ENCODE measurements at regions of chr11 and their contacts with region 1.

Region 1: GRCh38 chr11:104623518-104623917 is 274.7 kb downstream of the CASP12 start:
- DNase-seq: no peak
- H3K4me3 Mint-ChIP-seq: no peak overlapping the region
- H3K27ac Mint-ChIP-seq: no peak overlapping the region
- H3K4me1 Mint-ChIP-seq: peaks cover 42% of the 10 kb centered on the region
- H3K27me3 Mint-ChIP-seq: no peaks in the 10 kb centered on the region
- CTCF ChIP-seq: no peak

Region 2: GRCh38 chr11:104658177-104658576 is 34.7 kb after region 1 on chr11:
- CTCF ChIA-PET with region 1: no interaction called
- intact Hi-C with region 1: loop called (anchors 1 kb)
- DNase-seq: no peak
- H3K4me3 Mint-ChIP-seq: no peak overlapping the region
- H3K27ac Mint-ChIP-seq: no peak overlapping the region
- H3K4me1 Mint-ChIP-seq: no peaks in the 10 kb centered on the region
- H3K27me3 Mint-ChIP-seq: no peaks in the 10 kb centered on the region
- CTCF ChIP-seq: no peak

Region 3: DNA sequence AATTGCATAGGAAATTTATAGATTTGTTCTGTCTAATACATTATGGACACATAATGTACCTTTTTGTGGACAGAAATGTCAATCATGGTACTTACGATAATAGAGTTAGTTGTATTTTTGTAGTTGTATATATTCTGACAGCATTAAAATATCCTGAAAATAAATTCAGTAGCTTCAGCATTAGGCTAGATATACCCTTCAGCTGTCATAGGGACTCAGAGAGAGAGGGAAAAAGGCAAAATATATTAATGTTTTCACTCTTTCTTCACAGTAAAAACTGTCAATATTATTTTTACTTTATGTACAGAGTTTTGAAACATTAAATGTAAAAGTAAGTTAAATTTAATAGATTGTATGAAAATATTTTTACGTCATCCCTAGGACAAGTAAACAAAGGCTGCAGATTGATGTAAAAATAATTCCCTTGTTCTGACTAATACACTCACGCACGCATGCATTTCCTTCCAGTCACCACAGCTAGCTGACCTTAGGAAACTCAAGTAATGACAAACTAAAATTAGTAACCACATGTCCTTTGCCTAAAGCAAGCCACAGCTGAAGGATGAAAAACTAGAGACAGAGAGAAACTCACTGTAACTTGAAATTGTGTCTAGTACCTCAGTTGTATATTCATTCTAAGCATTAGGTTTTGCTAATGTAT is 620.8 kb after region 1 on chr11:
- CTCF ChIA-PET with region 1: no interaction called
- intact Hi-C with region 1: no loop called
- DNase-seq: peak; percentile 23
- H3K4me3 Mint-ChIP-seq: no peak overlapping the region
- H3K27ac Mint-ChIP-seq: no peak overlapping the region
- H3K4me1 Mint-ChIP-seq: no peaks in the 10 kb centered on the region
- H3K27me3 Mint-ChIP-seq: no peaks in the 10 kb centered on the region
- CTCF ChIP-seq: no peak

Region 4: GRCh38 chr11:106231591-106231990 is 1608.1 kb after region 1 on chr11:
- CTCF ChIA-PET with region 1: no interaction called
- intact Hi-C with region 1: no loop called
- DNase-seq: no peak
- H3K4me3 Mint-ChIP-seq: no peak overlapping the region
- H3K27ac Mint-ChIP-seq: no peak overlapping the region
- H3K4me1 Mint-ChIP-seq: no peaks in the 10 kb centered on the region
- H3K27me3 Mint-ChIP-seq: no peaks in the 10 kb centered on the region
- CTCF ChIP-seq: no peak